Activated CD4-positive, alpha-beta T cell treated with anti-CD3 and anti-CD28 coated beads, Interleukin-2, amount 10 ng/mL, durations not matched to agents 24 days and 14 days (primary cell): ENCODE measurements at regions of chr1 and their contacts with region 1.

Region 1: GRCh38 chr1:197868751-197869489 is 33.5 kb upstream of the C1orf53 start:
- DNase-seq: peak; percentile 83
- H3K4me3 Mint-ChIP-seq: no peak overlapping the region
- H3K27ac Mint-ChIP-seq: no peak overlapping the region
- H3K4me1 Mint-ChIP-seq: peaks cover 1% of the 10 kb centered on the region
- H3K27me3 Mint-ChIP-seq: peaks cover 23% of the 10 kb centered on the region

Region 2: GRCh38 chr1:197521118-197521739 is 347.7 kb before region 1 on chr1:
- intact Hi-C with region 1: loop called (anchors 2 kb)
- DNase-seq: peak; percentile 81
- H3K4me3 Mint-ChIP-seq: no peak overlapping the region
- H3K27ac Mint-ChIP-seq: no peak overlapping the region
- H3K4me1 Mint-ChIP-seq: peaks cover 5% of the 10 kb centered on the region
- H3K27me3 Mint-ChIP-seq: no peaks in the 10 kb centered on the region

Region 3: DNA sequence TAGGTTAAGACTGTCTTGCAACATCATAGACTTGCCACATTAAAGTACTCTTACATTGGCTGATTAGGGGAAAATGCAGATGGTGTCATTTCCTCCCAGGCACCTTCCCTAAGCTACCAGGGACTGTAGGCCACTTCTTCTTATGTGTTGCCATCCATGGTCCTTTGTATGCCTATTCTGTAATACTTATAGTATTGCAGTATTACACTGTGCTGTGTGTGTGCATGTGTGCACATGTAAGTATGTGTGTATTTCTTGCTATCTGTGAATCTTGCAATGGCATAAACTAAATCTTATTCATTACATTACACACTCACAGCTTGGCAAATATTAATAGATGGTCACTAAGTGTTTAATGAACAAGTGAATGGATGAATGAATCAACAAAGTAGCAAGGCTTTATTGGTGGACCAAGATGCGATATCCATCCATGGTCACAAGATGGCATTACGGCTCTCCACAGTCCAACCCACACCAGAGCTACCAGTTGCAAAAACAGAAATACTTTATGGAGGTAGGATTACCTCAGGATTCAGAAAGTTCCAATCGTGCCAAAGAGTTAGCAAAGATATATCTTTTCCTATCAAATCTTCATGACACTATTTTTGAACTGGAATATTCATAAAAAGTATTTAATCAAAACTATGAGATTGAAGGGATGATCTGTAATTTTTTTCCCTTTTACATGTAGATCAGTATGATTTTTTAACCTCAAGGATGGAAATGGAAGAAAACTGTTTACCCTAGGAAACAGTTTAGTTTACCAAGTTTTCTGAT is 253.8 kb before region 1 on chr1:
- intact Hi-C with region 1: loop called (anchors 1 kb)
- DNase-seq: peak; percentile 70
- H3K4me3 Mint-ChIP-seq: no peak overlapping the region
- H3K27ac Mint-ChIP-seq: no peak overlapping the region
- H3K4me1 Mint-ChIP-seq: no peaks in the 10 kb centered on the region
- H3K27me3 Mint-ChIP-seq: no peaks in the 10 kb centered on the region

Region 4: DNA sequence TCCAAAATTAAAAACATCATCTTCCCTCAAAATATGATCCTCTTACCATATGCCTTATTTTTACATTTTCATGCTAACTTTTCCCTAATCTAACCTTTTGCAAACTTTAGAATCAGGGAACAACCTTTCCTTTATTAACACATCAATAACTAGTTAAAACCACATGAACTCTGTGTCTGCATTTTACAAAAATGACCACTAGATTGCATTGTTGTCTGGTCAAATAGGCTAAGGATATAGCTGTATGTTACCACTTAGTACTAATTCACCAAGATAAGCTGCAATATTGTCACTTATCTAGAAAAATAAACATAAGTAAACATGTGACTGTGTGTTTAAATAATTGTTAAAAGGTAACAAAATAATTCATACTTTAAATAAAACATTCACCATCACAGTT is 176.0 kb before region 1 on chr1:
- intact Hi-C with region 1: loop called (anchors 1 kb)
- DNase-seq: no peak
- H3K4me3 Mint-ChIP-seq: no peak overlapping the region
- H3K27ac Mint-ChIP-seq: no peak overlapping the region
- H3K4me1 Mint-ChIP-seq: no peaks in the 10 kb centered on the region
- H3K27me3 Mint-ChIP-seq: no peaks in the 10 kb centered on the region

Region 5: GRCh38 chr1:197857477-197857876 is 11.4 kb before region 1 on chr1:
- intact Hi-C with region 1: no loop called
- DNase-seq: no peak
- H3K4me3 Mint-ChIP-seq: no peak overlapping the region
- H3K27ac Mint-ChIP-seq: no peak overlapping the region
- H3K4me1 Mint-ChIP-seq: no peaks in the 10 kb centered on the region
- H3K27me3 Mint-ChIP-seq: peaks cover 2% of the 10 kb centered on the region

Region 6: DNA sequence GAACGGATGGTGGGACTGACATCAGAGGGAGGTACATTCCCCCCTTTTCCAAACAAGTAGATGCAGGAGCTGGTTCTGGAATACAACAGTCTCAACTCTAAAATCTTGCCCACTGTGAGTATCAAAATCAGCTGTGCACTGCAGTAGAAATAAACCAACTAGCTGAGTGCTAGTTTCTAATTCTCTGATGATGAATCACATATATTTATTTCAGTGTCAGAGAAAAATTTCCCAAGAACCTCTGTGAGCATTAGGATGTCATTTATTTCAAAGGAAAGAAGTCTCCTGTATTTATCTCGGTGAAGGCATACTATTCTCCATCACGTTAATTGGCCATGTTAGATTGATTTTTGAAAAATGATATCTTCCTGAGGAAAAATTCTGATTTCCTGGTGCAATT is 115.4 kb after region 1 on chr1:
- intact Hi-C with region 1: no loop called
- DNase-seq: no peak
- H3K4me3 Mint-ChIP-seq: no peak overlapping the region
- H3K27ac Mint-ChIP-seq: no peak overlapping the region
- H3K4me1 Mint-ChIP-seq: no peaks in the 10 kb centered on the region
- H3K27me3 Mint-ChIP-seq: peaks cover 24% of the 10 kb centered on the region